ENCODE measurements at regions of chrX and their contacts with region 1.

Region 1: GRCh38 chrX:47384502-47384901 is 14.1 kb downstream of the ZNF157 start:
- H3K4me3 ChIP-seq: no peak overlapping the region
- H3K27ac ChIP-seq: no peak overlapping the region
- H3K4me1 ChIP-seq: no peaks in the 10 kb centered on the region
- CTCF ChIP-seq: 0 out of 2 replicates have a peak, but pooled peaks have one; percentile 26

Region 2: DNA sequence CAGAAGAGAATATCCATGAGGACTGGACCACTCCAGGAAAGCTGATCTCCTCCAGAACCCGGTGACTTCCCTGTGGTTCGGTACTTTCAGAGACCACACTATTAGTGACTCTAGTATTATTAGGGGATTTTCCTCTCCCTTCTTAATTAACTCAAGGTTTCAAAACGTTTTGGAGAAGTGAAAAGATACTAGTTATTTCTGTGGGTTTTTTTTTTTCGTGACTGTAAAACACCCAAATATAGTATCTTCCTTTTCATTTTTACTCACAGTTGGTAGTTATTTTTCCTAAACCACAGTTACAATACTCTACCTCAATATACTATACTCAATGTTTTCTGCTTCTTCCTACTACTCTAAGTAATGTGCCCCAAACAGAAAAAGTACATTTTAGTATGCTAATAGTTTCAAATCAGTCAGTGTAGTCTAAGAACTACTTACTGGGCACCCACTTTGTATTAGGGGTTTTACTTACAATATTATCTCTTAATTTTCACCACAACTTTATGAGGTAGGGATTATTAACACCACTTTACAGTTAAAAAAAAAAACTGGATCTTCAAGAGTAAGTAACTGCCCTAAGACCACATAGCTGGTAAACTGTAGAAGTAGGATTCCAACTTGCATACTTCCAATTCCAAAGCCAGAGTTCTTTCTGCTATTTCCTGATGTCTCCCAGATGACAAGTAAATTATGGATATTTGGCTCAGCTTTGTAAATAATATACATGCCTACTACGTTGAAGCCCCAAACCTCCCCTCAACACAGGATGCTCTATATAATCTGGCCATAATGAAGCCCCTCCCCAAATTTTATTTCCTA is 670.6 kb before region 1 on chrX:
- CTCF ChIA-PET with region 1: no interaction called
- POLR2A ChIA-PET with region 1: no interaction called
- H3K4me3 ChIP-seq: no peak overlapping the region
- H3K27ac ChIP-seq: no peak overlapping the region
- H3K4me1 ChIP-seq: peaks cover 8% of the 10 kb centered on the region
- CTCF ChIP-seq: no peak

Region 3: GRCh38 chrX:46873746-46874145 is 510.8 kb before region 1 on chrX:
- CTCF ChIA-PET with region 1: no interaction called
- POLR2A ChIA-PET with region 1: no interaction called
- H3K4me3 ChIP-seq: no peak overlapping the region
- H3K27ac ChIP-seq: no peak overlapping the region
- H3K4me1 ChIP-seq: no peaks in the 10 kb centered on the region
- CTCF ChIP-seq: no peak

Region 4: GRCh38 chrX:47193475-47194193 is 190.9 kb before region 1 on chrX and contains the start of gene UBA1:
- CTCF ChIA-PET with region 1: interaction called, 35 read pairs
- POLR2A ChIA-PET with region 1: interaction called, 5 read pairs
- H3K4me3 ChIP-seq: peak within 1 kb of the TSS; percentile 97
- H3K27ac ChIP-seq: peak within 1 kb of the TSS; percentile 90
- H3K4me1 ChIP-seq: peaks cover 10% of the 10 kb centered on the region; the same call in 1 of the 2 replicates
- CTCF ChIP-seq: peak; percentile 80

Region 5: DNA sequence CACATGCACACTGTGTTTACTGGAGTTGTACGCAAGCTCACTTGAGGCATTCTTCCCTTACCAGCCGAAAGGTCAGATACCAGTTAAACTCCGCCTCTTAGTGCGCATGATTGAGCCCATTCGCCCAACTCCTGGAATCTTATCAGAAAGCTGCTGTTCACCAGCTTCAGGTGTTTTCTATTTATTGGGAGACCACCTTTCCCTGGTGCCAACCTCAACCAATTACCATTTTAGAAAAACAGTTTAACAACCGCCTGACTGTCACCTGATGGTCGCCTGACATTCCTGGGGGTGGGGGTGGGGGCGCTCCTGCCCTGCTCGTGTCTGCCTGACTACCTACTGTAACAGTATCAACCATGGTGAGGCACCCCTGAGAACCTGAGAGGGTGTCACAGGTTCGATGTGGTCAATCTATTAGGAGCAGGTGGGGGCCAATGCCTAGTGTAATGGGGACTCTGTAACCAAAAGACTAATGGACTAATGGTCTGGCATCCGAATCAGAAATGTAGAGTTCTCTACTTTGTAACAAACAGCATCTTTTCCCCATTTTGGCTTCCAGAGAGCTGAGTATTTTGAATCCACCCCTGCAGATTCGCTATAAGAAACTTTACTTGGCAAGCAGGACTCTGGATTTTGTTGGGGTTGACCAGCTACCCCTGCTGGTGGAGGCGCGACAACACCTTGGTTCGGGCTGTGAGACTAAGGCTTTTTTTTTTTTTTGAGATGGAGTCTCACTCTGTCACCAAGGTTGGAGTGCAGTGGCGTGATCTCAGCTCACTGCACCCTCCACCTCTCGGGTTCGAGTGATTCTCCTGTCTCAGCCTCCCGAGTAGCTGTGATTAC is 72.3 kb before region 1 on chrX:
- CTCF ChIA-PET with region 1: interaction called, 12 read pairs
- POLR2A ChIA-PET with region 1: no interaction called
- H3K4me3 ChIP-seq: no peak overlapping the region
- H3K27ac ChIP-seq: no peak overlapping the region
- H3K4me1 ChIP-seq: no peaks in the 10 kb centered on the region
- CTCF ChIP-seq: peak; percentile 57; the same call in 1 of the 2 replicates

Region 6: GRCh38 chrX:47361538-47362511 is 22.7 kb before region 1 on chrX:
- CTCF ChIA-PET with region 1: interaction called, 11 read pairs
- POLR2A ChIA-PET with region 1: no interaction called
- H3K4me3 ChIP-seq: peak overlapping the region; percentile 36
- H3K27ac ChIP-seq: peak overlapping the region; percentile 81
- H3K4me1 ChIP-seq: peaks cover 2% of the 10 kb centered on the region; the same call in 1 of the 2 replicates
- CTCF ChIP-seq: no peak

Measured in HEK293 (cell line).